Activated CD8-positive, alpha-beta T cell treated with anti-CD3 and anti-CD28 coated beads, Interleukin-2, amount 10 ng/mL, durations not matched to agents 7 days and 5 days (primary cell): ENCODE measurements at regions of chr1 and their contacts with region 1.

Region 1: DNA sequence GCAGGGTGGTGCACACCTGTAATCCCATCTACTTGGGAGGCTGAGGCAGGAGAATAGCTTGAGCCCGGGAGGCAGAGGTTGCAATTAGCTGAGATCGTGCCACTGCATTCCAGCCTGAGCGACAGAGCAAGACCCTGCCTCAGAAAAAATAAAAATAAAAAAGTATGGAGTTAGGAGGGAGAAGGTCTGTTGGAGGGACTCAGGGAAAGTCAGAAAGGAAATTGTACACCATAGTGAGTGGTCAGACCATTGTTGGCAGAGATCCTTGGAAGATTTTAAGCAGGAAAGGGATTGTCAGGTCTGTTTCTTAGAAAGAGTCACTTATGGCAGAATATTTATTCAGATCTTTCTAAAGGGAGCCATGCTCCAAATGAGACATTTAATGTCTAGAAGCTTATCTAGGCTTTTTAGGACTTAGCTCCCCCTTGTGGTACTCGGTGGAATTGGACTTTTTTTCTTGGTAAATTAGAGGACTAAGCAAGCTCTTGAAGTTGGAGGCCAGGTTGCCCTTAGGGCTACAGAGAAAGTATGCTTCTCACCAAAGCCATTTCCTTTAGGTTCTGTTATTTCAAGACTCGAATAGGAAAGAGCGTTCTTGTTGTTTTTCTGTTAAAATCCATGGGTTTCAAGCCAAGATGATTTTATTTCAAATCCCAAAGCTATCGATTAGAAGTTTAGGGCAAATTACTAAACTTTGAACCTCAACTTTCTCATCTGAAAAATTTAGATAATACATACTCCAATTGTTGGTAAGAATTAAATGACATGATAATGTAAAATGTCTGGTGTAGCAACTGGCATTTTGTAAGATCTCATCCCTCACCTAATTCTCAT is 16.5 kb downstream of the MIA3 start:
- DNase-seq: peak; percentile 90
- ATAC-seq: peak; percentile 87
- H3K4me3 Mint-ChIP-seq: no peak overlapping the region
- H3K27ac Mint-ChIP-seq: peak overlapping the region; percentile 67
- H3K4me1 Mint-ChIP-seq: peaks cover 14% of the 10 kb centered on the region
- H3K27me3 Mint-ChIP-seq: no peaks in the 10 kb centered on the region

Region 2: GRCh38 chr1:222465211-222466041 is 169.0 kb before region 1 on chr1:
- CTCF ChIA-PET with region 1: interaction called, 62 read pairs
- POLR2A ChIA-PET with region 1: interaction called, 5 read pairs
- DNase-seq: peak; percentile 83
- ATAC-seq: peak; percentile 96
- H3K4me3 Mint-ChIP-seq: peak overlapping the region; percentile 73
- H3K27ac Mint-ChIP-seq: peak overlapping the region; percentile 87
- H3K4me1 Mint-ChIP-seq: peaks cover 13% of the 10 kb centered on the region
- H3K27me3 Mint-ChIP-seq: peaks cover 6% of the 10 kb centered on the region

Region 3: DNA sequence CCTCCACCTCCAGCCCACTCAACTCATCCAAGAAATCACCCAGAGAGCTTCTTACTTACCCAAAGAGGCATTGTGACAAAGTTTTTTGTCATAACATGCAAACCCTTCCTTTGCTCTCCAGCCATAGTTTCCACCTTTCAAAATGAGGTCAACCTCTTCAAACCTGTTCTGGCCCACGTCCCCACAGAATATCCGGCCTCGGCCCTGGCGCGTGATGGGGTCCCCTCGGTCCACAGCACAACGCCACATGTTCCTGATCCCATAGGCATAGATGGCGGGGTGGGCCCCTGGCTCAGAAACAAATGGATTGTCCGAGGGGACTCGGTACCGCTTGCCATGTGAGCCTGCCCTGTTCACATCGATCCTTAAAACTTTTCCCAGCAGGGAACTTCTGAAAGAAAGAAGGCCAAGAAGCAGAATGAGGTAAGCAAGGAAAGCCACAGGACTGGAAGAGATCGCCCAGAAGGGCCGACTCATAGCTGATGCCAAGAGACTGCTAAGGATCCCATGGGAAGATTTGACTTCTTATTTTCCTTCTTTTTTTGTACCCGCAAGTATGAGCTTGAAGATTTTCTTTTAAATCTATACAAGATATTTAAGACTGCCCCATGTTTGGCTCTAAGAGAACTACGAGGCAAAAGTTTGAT is 94.3 kb before region 1 on chr1:
- CTCF ChIA-PET with region 1: no interaction called
- POLR2A ChIA-PET with region 1: no interaction called
- DNase-seq: no peak
- ATAC-seq: no peak
- H3K4me3 Mint-ChIP-seq: no peak overlapping the region
- H3K27ac Mint-ChIP-seq: no peak overlapping the region
- H3K4me1 Mint-ChIP-seq: no peaks in the 10 kb centered on the region
- H3K27me3 Mint-ChIP-seq: peaks cover 6% of the 10 kb centered on the region

Region 4: GRCh38 chr1:222589462-222590302 is 44.7 kb before region 1 on chr1 and contains the start of gene TAF1A:
- CTCF ChIA-PET with region 1: interaction called, 30 read pairs
- POLR2A ChIA-PET with region 1: interaction called, 6 read pairs
- DNase-seq: peak; percentile 92
- ATAC-seq: peak; percentile 100
- H3K4me3 Mint-ChIP-seq: peak within 1 kb of the TSS; percentile 97
- H3K27ac Mint-ChIP-seq: peak within 1 kb of the TSS; percentile 99
- H3K4me1 Mint-ChIP-seq: peaks cover 42% of the 10 kb centered on the region
- H3K27me3 Mint-ChIP-seq: no peaks in the 10 kb centered on the region
- total RNA-seq, gene TAF1A: 10.0 to 12.8 TPM

Region 5: DNA sequence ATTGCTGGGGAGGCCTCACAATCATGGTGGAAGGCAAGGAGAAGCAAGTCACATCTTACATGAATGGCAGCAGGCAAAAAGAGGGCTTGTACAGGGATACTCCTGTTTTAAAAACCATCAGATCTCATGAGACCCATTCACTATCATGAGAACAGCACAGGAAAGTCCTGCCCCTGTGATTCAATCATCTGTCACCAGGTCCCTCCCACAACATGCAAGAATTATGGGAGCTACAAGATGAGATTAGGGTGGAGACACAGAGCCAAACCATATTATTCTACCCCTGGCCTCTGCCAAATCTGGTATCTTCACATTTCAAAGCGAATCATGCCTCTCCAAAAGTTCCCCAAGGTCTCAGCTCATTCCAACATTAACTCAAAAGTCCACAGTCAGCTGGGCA is 27.6 kb before region 1 on chr1:
- CTCF ChIA-PET with region 1: no interaction called
- POLR2A ChIA-PET with region 1: no interaction called
- DNase-seq: no peak
- ATAC-seq: no peak
- H3K4me3 Mint-ChIP-seq: no peak overlapping the region
- H3K27ac Mint-ChIP-seq: no peak overlapping the region
- H3K4me1 Mint-ChIP-seq: no peaks in the 10 kb centered on the region
- H3K27me3 Mint-ChIP-seq: peaks cover 23% of the 10 kb centered on the region

Region 6: GRCh38 chr1:222617367-222617951 is 16.9 kb before region 1 on chr1:
- CTCF ChIA-PET with region 1: interaction called, 43 read pairs
- POLR2A ChIA-PET with region 1: interaction called, 3 read pairs
- DNase-seq: peak; percentile 96
- ATAC-seq: peak; percentile 96
- H3K4me3 Mint-ChIP-seq: peak overlapping the region; percentile 83
- H3K27ac Mint-ChIP-seq: peak overlapping the region; percentile 90
- H3K4me1 Mint-ChIP-seq: peaks cover 19% of the 10 kb centered on the region
- H3K27me3 Mint-ChIP-seq: peaks cover 23% of the 10 kb centered on the region

Region 7: GRCh38 chr1:222624214-222624613 is 10.2 kb before region 1 on chr1:
- CTCF ChIA-PET with region 1: interaction called, 43 read pairs
- POLR2A ChIA-PET with region 1: no interaction called
- DNase-seq: no peak
- ATAC-seq: no peak
- H3K4me3 Mint-ChIP-seq: no peak overlapping the region
- H3K27ac Mint-ChIP-seq: no peak overlapping the region
- H3K4me1 Mint-ChIP-seq: peaks cover 8% of the 10 kb centered on the region
- H3K27me3 Mint-ChIP-seq: no peaks in the 10 kb centered on the region

Region 8: DNA sequence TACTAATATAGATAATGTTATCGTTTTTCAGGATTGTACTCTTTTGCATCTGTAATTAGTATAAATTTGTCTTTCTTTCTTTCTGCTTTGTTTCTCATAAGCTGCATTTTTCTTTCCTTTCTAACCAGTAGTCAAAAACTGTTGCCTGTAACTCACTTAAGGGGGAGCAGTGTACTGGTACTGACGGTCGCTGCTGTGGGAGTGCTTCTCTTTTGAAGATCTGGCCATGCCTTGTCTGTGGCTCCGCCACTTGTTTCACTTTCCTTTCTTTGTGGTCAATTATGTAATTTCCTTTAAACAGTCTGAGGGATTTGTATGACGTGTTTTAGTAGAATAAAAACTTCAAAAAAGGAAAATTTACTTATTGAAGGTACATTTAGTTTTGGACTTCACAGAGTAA is 20.5 kb after region 1 on chr1:
- CTCF ChIA-PET with region 1: interaction called, 29 read pairs
- POLR2A ChIA-PET with region 1: interaction called, 5 read pairs
- DNase-seq: peak; percentile 88
- ATAC-seq: peak; percentile 91
- H3K4me3 Mint-ChIP-seq: peak overlapping the region; percentile 55
- H3K27ac Mint-ChIP-seq: peak overlapping the region; percentile 89
- H3K4me1 Mint-ChIP-seq: peaks cover 68% of the 10 kb centered on the region
- H3K27me3 Mint-ChIP-seq: no peaks in the 10 kb centered on the region